CD8-positive, alpha-beta memory T cell (primary cell): ENCODE measurements at regions of chr19 and their contacts with region 1.

Region 1: DNA sequence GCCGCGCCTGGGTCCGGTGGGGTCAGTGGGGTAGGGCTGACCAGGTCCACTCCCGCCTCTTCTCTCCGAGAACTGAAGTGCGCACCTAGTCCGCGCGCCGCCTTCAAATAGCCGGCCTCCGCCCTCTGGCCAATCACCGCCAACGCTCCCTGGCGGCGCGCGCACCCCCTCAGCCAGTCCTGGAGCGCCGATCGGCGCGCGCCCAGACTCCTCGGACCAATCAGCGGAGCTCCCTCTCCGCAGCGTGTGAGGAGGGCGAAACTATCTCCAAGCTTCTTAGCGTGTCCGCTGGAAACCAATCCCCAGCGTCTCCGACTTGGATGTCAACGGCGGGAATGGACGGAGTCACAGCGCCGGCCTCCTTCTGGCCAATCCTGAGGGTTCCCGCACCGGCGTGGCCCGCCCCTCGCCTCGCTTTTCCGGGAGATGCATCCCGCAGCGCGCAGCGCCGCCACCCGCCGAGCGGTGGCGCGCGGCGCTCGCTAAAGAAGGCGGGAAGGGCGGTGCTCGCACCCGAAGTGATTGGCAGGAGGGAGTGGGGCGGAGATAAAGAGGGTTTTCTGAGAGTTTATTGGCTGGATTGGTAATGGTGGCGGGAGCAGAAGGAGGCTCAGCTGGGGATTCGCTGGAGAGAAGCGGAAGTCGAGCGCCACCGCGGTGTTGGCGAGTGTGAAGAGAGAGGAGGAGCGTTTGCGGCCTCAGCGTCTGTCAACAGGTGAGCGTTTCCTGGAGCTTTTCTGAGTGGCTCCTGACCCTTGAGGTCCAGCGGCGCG is at the start of gene ASF1B:
- DNase-seq: peak; percentile 93 to 99 (median 99)
- H3K4me3 ChIP-seq: peak within 1 kb of the TSS; percentile 85
- H3K4me3 Mint-ChIP-seq: peak within 1 kb of the TSS; percentile 83 to 94 (median 90)
- H3K27ac ChIP-seq: peak within 1 kb of the TSS; percentile 93
- H3K27ac Mint-ChIP-seq: peak within 1 kb of the TSS; percentile 70 to 98 (median 94)
- H3K4me1 ChIP-seq: peaks cover 15% of the 10 kb centered on the region
- H3K4me1 Mint-ChIP-seq: peaks cover 16 to 32% (median 29%) of the 10 kb centered on the region in 3 donors
- H3K27me3 ChIP-seq: no peaks in the 10 kb centered on the region
- H3K27me3 Mint-ChIP-seq: no peaks in the 10 kb centered on the region
- total RNA-seq, gene ASF1B: 75.0 to 76.2 TPM

Region 2: DNA sequence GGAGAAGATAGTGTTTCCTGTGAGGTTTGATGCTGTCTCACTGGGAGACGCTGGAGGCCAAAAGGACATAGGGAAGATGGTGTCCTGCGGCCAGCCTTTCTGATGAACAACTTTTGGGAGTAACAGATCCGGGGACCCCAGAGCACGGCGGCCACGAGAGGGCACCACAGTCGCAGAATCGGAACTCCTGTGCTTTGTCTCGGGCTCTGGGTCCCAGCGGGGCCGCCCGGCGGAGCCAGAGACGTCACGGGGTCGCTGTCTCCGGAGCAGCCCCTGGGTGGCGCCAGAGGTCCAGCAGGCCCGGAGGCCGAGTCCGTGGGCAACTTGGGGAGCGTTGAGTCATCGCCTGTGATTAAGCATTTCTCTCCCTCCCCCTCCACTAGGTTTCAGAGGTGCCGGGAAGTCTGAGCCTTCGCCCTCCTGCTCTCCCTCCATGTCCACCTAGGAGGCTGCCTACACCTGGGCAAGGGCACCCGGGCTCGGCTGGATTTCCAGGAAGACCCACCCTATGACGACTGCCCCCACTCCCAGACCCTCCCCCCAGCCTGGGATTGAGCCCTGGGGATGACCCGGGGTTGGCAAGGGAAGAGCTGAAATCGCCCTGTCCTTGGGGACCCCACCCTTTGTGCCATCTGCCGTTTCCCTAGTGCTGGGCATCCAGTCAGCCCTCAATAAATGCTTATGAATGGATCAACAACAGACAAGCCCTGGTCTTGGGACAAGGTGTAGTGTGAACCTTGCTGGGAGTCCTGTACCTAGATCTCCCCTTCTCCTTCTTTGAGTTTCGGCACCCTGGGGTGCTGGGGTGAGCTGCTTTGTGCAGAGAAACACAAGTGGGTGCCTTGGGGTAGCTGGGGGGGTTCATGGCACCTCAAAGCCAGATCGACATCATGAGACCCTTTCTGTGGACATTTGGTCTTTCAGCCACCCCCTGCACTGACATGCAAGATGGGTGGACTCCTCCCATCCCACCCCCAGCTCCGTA is 256.3 kb before region 1 on chr19:
- CTCF ChIA-PET with region 1: interaction called, 35 read pairs
- POLR2A ChIA-PET with region 1: interaction called, 3 read pairs
- DNase-seq: peak; percentile 93 to 99 (median 98)
- H3K4me3 ChIP-seq: peak overlapping the region; percentile 52
- H3K4me3 Mint-ChIP-seq: peak overlapping the region; percentile 54 to 83 (median 72)
- H3K27ac ChIP-seq: peak overlapping the region; percentile 74
- H3K27ac Mint-ChIP-seq: peak overlapping the region in 7 of 8 donors; percentile 88 to 92 (median 91)
- H3K4me1 ChIP-seq: peaks cover 48% of the 10 kb centered on the region
- H3K4me1 Mint-ChIP-seq: peaks cover 33 to 49% (median 37%) of the 10 kb centered on the region in 3 donors
- H3K27me3 ChIP-seq: no peaks in the 10 kb centered on the region
- H3K27me3 Mint-ChIP-seq: no peaks in the 10 kb centered on the region

Region 3: DNA sequence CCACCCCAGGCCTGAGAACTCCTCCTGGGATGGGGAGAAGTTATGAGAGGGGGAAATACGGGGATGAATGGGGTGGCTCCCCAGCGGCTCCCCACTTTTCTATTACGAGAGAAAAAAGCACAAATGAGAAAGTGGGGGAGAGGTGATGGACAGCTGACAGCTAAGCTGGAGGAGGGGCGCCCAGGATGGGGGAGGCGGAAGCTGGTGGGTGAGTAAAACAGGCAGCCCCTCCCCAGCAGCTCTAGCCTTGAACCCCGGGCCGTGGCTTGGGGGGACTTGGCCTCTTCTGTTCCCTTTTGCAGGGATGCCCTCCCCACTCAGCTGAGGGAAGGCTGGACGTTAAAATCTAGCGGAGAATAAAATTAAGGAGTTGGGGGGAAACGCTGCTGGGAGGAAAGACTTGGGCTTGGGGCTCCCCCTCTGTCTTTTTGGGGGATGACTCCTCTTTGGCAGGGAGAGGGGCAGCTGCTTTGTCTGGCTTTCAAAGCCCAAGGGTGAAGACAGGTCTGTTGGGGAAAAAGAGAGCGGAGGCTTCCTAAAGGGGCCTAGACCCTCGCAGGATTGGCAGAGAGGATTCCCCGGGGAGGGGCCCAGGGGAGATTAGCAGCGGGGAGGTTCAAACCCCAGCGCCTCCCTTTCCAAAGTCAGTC is 44.8 kb before region 1 on chr19:
- CTCF ChIA-PET with region 1: interaction called, 12 read pairs
- POLR2A ChIA-PET with region 1: interaction called, 4 read pairs
- DNase-seq: peak in 1 of 5 donors; percentile 9
- H3K4me3 ChIP-seq: peak overlapping the region; percentile 89
- H3K4me3 Mint-ChIP-seq: peak overlapping the region; percentile 88 to 100 (median 99)
- H3K27ac ChIP-seq: peak overlapping the region; percentile 59
- H3K27ac Mint-ChIP-seq: peak overlapping the region; percentile 94 to 99 (median 98)
- H3K4me1 ChIP-seq: peaks cover 14% of the 10 kb centered on the region
- H3K4me1 Mint-ChIP-seq: peaks cover 10 to 24% (median 13%) of the 10 kb centered on the region in 3 donors
- H3K27me3 ChIP-seq: no peaks in the 10 kb centered on the region
- H3K27me3 Mint-ChIP-seq: peaks cover 0 to 4% of the 10 kb centered on the region in 2 donors

Region 4: DNA sequence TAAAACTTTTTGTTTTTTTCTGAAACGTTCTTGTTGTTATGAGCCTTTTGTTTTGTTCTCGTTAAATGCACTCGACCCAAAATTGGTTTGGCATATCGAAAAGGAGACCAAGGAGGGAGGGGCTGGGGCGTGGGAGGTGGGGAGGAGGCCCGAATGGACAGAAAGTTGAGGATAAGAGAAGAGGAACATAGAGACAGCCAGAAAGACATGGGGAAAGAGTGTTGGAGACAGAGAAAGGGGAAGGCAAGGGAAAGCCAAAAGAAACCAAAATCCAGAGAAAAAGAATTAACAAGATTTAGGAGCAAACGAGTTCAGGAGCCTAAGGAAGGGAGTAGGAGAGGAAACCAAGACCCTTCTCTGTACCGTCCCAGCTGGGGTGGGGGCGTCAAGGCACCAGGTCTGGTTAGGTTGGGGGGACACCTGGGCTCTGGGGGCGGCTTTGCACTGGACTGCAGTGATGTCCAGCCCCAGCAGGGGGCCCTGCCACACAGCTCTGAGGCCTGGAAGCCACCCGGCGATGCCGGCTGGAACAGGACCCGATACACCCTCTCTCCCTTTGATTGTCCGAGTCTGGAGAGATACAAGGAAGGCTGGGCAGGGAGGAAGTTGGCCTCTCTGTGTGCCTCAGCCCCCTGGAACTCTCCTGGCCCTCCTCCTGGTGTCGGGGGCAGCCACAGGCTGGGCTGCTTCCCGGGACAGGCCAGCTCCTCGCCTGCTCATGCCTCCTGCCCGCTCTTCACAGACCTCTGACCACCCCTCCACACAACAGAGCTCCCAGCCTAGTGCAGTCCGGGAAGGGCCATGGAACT is 11.3 kb after region 1 on chr19:
- CTCF ChIA-PET with region 1: interaction called, 19 read pairs
- POLR2A ChIA-PET with region 1: interaction called, 8 read pairs
- DNase-seq: peak in 4 of 5 donors; percentile 30 to 56 (median 44)
- H3K4me3 ChIP-seq: no peak overlapping the region
- H3K4me3 Mint-ChIP-seq: peak overlapping the region in 6 of 7 donors; percentile 25 to 89 (median 48)
- H3K27ac ChIP-seq: peak overlapping the region; percentile 35
- H3K27ac Mint-ChIP-seq: peak overlapping the region; percentile 85 to 99 (median 97)
- H3K4me1 ChIP-seq: peaks cover 31% of the 10 kb centered on the region
- H3K4me1 Mint-ChIP-seq: peaks cover 21 to 36% (median 35%) of the 10 kb centered on the region in 3 donors
- H3K27me3 ChIP-seq: no peaks in the 10 kb centered on the region
- H3K27me3 Mint-ChIP-seq: no peaks in the 10 kb centered on the region

Region 5: GRCh38 chr19:14222886-14223285 is 86.2 kb after region 1 on chr19:
- CTCF ChIA-PET with region 1: no interaction called
- POLR2A ChIA-PET with region 1: no interaction called
- DNase-seq: no peak
- H3K4me3 ChIP-seq: no peak overlapping the region
- H3K4me3 Mint-ChIP-seq: no peak overlapping the region
- H3K27ac ChIP-seq: no peak overlapping the region
- H3K27ac Mint-ChIP-seq: no peak overlapping the region
- H3K4me1 ChIP-seq: no peaks in the 10 kb centered on the region
- H3K4me1 Mint-ChIP-seq: peaks cover 6 to 11% (median 10%) of the 10 kb centered on the region in 3 donors
- H3K27me3 ChIP-seq: no peaks in the 10 kb centered on the region
- H3K27me3 Mint-ChIP-seq: peaks cover 0 to 2% of the 10 kb centered on the region in 2 donors

Region 6: DNA sequence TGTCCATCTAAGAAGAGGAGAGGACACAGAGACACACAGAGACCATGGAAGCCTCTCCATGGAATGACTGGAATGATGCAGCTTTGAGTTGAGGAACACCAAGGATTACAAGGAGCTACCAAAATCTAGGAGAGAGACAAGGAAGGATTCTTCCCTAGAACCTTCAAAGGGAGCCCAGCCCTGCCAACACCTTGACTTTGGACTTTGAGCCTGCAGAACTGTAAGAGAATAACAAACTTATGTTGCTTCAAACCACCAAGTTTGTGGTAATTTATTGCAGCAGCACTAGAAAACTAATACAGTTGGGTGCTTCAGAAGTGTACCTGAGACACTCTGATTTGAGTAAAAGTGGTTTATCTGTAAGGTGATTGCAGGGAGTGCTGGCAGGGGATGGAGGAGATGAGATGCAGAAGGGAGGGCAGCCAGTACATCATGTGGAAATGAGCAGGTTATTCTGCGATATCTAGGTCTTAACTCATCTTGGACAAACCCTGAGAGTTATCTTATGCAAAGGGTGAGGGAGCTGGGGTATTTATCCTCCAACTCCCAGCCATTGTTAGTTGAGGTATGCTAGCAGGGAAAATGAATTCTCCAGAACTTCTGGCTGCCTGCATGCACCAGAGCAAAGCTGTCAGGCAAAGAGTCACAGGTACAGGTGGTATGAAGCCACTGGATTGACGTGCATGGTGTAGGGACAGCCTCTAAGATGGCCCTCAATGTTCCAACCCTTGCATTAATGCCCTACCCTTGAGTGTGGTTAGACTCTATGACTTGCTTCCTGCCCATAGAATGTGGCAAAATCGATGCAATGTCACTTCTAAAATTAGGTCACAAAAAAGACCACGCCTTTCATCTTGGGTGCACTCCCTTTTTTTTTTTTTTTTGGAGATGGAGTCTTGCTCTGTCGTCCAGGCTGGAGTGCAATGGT is 100.6 kb after region 1 on chr19:
- CTCF ChIA-PET with region 1: no interaction called
- POLR2A ChIA-PET with region 1: no interaction called
- DNase-seq: peak in 2 of 5 donors; percentile 3 to 38
- H3K4me3 ChIP-seq: no peak overlapping the region
- H3K4me3 Mint-ChIP-seq: peak overlapping the region in 4 of 7 donors; percentile 11 to 69 (median 28)
- H3K27ac ChIP-seq: no peak overlapping the region
- H3K27ac Mint-ChIP-seq: peak overlapping the region in 3 of 8 donors; percentile 5 to 70 (median 57)
- H3K4me1 ChIP-seq: no peaks in the 10 kb centered on the region
- H3K4me1 Mint-ChIP-seq: peaks cover 11 to 17% (median 14%) of the 10 kb centered on the region in 3 donors
- H3K27me3 ChIP-seq: no peaks in the 10 kb centered on the region
- H3K27me3 Mint-ChIP-seq: no peaks in the 10 kb centered on the region

Region 7: GRCh38 chr19:14347999-14348889 is 211.5 kb after region 1 on chr19:
- CTCF ChIA-PET with region 1: interaction called, 61 read pairs
- POLR2A ChIA-PET with region 1: no interaction called
- DNase-seq: peak; percentile 52 to 75 (median 56)
- H3K4me3 ChIP-seq: peak overlapping the region; percentile 45
- H3K4me3 Mint-ChIP-seq: peak overlapping the region in 5 of 7 donors; percentile 28 to 73 (median 47)
- H3K27ac ChIP-seq: no peak overlapping the region
- H3K27ac Mint-ChIP-seq: peak overlapping the region in 4 of 8 donors; percentile 42 to 65 (median 50)
- H3K4me1 ChIP-seq: peaks cover 24% of the 10 kb centered on the region
- H3K4me1 Mint-ChIP-seq: peaks cover 11 to 24% (median 18%) of the 10 kb centered on the region in 3 donors
- H3K27me3 ChIP-seq: no peaks in the 10 kb centered on the region
- H3K27me3 Mint-ChIP-seq: no peaks in the 10 kb centered on the region

Region 8: DNA sequence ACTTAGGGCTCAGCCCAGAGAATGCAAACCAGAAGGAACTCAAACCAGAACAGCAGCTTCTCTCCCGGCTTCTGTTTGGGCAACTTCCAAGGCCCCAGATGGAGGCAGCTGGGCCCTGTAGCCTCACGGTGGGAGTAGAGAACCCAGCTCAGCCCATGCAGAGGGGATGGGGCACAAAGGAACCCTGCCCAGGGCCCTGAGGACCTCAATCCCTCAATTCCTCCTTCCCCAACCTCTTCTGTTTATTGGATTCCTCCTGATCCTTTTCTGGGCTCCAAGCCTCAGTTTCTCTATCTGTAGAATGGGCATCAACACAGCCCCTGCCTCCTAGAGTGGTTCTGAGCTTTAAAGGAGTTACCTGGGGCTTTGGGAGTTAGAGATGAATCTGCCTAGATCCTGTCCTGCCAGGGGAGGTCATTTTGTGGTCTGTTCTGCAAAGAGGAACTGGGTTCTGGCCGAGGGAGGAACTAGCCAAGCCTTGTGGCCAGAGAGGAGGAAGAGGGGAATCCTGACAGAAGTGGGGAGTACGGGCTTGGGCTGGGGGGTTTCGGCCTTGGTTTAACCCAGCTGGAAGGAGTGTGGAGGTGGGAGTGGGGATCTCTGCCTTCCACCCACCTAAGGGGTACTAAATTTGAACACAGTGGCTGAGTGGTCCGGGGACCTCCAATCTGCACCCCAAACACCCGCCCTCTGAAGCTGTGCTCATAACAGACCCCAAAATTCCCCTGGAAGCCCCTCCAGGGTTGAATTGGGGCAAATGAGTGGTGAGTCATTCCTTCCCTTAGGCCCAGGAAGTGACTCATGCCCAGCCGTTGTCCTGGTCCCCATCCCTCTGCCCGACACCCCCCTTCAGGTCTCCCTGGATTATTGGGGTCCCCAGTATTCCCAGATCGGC is 247.2 kb after region 1 on chr19:
- CTCF ChIA-PET with region 1: interaction called, 24 read pairs
- POLR2A ChIA-PET with region 1: interaction called, 10 read pairs
- DNase-seq: peak in 4 of 5 donors; percentile 60 to 87 (median 72)
- H3K4me3 ChIP-seq: peak overlapping the region; percentile 64
- H3K4me3 Mint-ChIP-seq: peak overlapping the region; percentile 84 to 100 (median 93)
- H3K27ac ChIP-seq: peak overlapping the region; percentile 99
- H3K27ac Mint-ChIP-seq: peak overlapping the region; percentile 91 to 99 (median 97)
- H3K4me1 ChIP-seq: peaks cover 33% of the 10 kb centered on the region
- H3K4me1 Mint-ChIP-seq: peaks cover 41 to 60% (median 44%) of the 10 kb centered on the region in 3 donors
- H3K27me3 ChIP-seq: no peaks in the 10 kb centered on the region
- H3K27me3 Mint-ChIP-seq: peaks cover 0 to 16% of the 10 kb centered on the region in 2 donors

Region 9: GRCh38 chr19:14472202-14472938 is 335.7 kb after region 1 on chr19:
- CTCF ChIA-PET with region 1: interaction called, 13 read pairs
- POLR2A ChIA-PET with region 1: interaction called, 3 read pairs
- DNase-seq: peak; percentile 76 to 88 (median 83)
- H3K4me3 ChIP-seq: peak overlapping the region; percentile 47
- H3K4me3 Mint-ChIP-seq: peak overlapping the region in 6 of 7 donors; percentile 50 to 85 (median 65)
- H3K27ac ChIP-seq: no peak overlapping the region
- H3K27ac Mint-ChIP-seq: no peak overlapping the region
- H3K4me1 ChIP-seq: peaks cover 33% of the 10 kb centered on the region
- H3K4me1 Mint-ChIP-seq: peaks cover 20 to 44% (median 30%) of the 10 kb centered on the region in 3 donors
- H3K27me3 ChIP-seq: peaks cover 23% of the 10 kb centered on the region
- H3K27me3 Mint-ChIP-seq: peaks cover 19 to 25% of the 10 kb centered on the region in 2 donors